ENCODE measurements at regions of chr12 and their contacts with region 1.

Region 1: GRCh38 chr12:64890873-64891468 is 66.5 kb downstream of the TBC1D30 start:
- DNase-seq: no peak
- ATAC-seq: peak; percentile 62

Region 2: DNA sequence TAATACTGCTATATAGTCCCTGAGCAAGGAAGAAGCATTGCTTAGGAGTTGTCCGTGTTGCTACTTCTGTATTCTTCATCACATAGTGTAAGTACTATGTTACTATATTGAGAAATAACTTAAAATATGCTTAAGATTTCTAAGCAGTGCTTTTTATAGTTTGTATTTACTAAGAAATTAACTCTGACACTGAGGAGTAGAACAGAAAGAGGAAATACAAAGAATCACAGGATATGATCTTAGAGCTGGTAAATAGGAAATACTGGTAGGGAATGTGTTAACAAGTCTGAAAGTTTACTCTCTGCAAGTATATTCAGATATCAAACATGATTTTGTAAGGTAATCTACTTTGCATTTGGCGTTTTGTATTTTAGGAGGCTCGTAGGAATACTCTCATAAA is 471.3 kb before region 1 on chr12:
- intact Hi-C with region 1: no loop called
- DNase-seq: no peak
- ATAC-seq: no peak

Region 3: GRCh38 chr12:65232476-65233077 is 341.6 kb after region 1 on chr12:
- intact Hi-C with region 1: loop called (anchors 10 kb)
- DNase-seq: no peak
- ATAC-seq: no peak

Region 4: GRCh38 chr12:66107451-66107915 is 1216.5 kb after region 1 on chr12:
- intact Hi-C with region 1: loop called (anchors 10 kb)
- DNase-seq: no peak
- ATAC-seq: peak; percentile 79

Measured in left ventricle myocardium superior (tissue), 1 donor.